ENCODE measurements at regions of chr16 and their contacts with region 1.

Region 1: DNA sequence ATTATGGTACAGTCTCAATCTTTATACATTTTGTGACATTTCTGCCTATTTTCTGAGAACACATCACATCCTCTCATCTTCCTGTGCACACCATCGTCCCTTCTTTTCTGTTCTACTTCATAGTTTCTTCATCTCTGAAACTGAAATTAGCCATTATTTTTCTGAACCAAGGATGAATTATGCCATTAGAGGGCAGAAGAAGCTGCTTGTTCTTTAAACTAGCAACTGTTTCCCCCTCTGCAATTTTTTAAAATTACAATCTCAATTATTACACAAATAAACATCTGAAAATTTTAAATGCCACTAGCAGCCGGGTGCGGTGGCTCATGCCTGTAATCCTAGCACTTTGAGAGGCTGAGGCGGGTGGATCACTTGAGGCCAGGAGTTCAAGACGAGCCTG is 41.3 kb downstream of the RBBP6 start:
- DNase-seq: no peak
- H3K4me3 ChIP-seq: no peak overlapping the region
- H3K27ac ChIP-seq: no peak overlapping the region
- H3K4me1 ChIP-seq: no peaks in the 10 kb centered on the region
- H3K27me3 ChIP-seq: no peaks in the 10 kb centered on the region
- CTCF ChIP-seq: peak in 3 of 4 experiments; percentile 9 to 31 (median 9)
- POLR2A ChIP-seq: no peak

Region 2: GRCh38 chr16:24800586-24800985 is 219.9 kb after region 1 on chr16:
- intact Hi-C with region 1: loop called (anchors 10 kb)
- DNase-seq: no peak
- H3K4me3 ChIP-seq: no peak overlapping the region
- H3K27ac ChIP-seq: no peak overlapping the region
- H3K4me1 ChIP-seq: no peaks in the 10 kb centered on the region
- H3K27me3 ChIP-seq: no peaks in the 10 kb centered on the region
- CTCF ChIP-seq: no peak
- POLR2A ChIP-seq: no peak